ENCODE measurements at regions of chr6 and their contacts with region 1.

Region 1: GRCh38 chr6:20401205-20402091 is at the start of gene E2F3:
- DNase-seq: peak; percentile 100
- H3K4me3 Mint-ChIP-seq: peak within 1 kb of the TSS; percentile 98
- H3K27ac Mint-ChIP-seq: peak within 1 kb of the TSS; percentile 91
- H3K4me1 Mint-ChIP-seq: peaks cover 8% of the 10 kb centered on the region
- H3K27me3 Mint-ChIP-seq: no peaks in the 10 kb centered on the region
- CTCF ChIP-seq: no peak
- total RNA-seq, gene E2F3: 18.5 and 18.7 TPM in 2 replicates

Region 2: GRCh38 chr6:20212392-20213217 is 188.8 kb before region 1 on chr6 and contains the start of gene MBOAT1:
- CTCF ChIA-PET with region 1: no interaction called
- POLR2A ChIA-PET with region 1: interaction called, 5 read pairs
- intact Hi-C with region 1: loop called (anchors 5 kb)
- DNase-seq: peak; percentile 94
- H3K4me3 Mint-ChIP-seq: peak within 1 kb of the TSS; percentile 86
- H3K27ac Mint-ChIP-seq: peak within 1 kb of the TSS; percentile 78
- H3K4me1 Mint-ChIP-seq: peaks cover 12% of the 10 kb centered on the region
- H3K27me3 Mint-ChIP-seq: no peaks in the 10 kb centered on the region
- CTCF ChIP-seq: no peak
- total RNA-seq, gene MBOAT1: 6.3 and 9.3 TPM in 2 replicates

Region 3: GRCh38 chr6:20291764-20292580 is 109.5 kb before region 1 on chr6:
- CTCF ChIA-PET with region 1: interaction called, 11 read pairs
- POLR2A ChIA-PET with region 1: interaction called, 4 read pairs
- intact Hi-C with region 1: loop called (anchors 2 kb)
- DNase-seq: peak; percentile 90
- H3K4me3 Mint-ChIP-seq: no peak overlapping the region
- H3K27ac Mint-ChIP-seq: no peak overlapping the region
- H3K4me1 Mint-ChIP-seq: no peaks in the 10 kb centered on the region
- H3K27me3 Mint-ChIP-seq: peaks cover 17% of the 10 kb centered on the region
- CTCF ChIP-seq: peak; percentile 81

Region 4: GRCh38 chr6:20411953-20412681 is 10.7 kb after region 1 on chr6:
- CTCF ChIA-PET with region 1: interaction called, 10 read pairs
- POLR2A ChIA-PET with region 1: interaction called, 17 read pairs
- intact Hi-C with region 1: no loop called
- DNase-seq: no peak
- H3K4me3 Mint-ChIP-seq: no peak overlapping the region
- H3K27ac Mint-ChIP-seq: peak overlapping the region; percentile 86
- H3K4me1 Mint-ChIP-seq: peaks cover 26% of the 10 kb centered on the region
- H3K27me3 Mint-ChIP-seq: no peaks in the 10 kb centered on the region
- CTCF ChIP-seq: no peak

Region 5: DNA sequence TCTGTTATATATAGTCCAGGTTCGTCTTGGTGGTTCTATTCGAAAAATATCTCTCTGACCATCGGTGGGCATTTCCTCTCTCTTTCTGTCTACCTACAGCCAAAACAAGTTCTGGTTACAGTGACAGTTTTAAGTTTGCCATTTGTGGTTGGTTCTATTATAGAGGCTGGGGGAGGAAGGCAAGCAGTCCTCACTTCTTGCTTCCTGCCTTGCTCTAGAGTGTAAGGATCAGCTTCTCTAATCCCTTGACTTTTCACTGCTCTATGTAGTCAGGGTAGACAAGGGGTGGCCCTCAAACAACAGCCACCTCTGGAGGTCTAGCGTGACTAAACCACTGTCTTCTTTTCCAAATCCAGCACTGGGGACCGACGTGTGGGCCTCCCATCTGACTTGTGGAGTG is 16.4 kb after region 1 on chr6:
- CTCF ChIA-PET with region 1: interaction called, 10 read pairs
- POLR2A ChIA-PET with region 1: interaction called, 17 read pairs
- intact Hi-C with region 1: no loop called
- DNase-seq: no peak
- H3K4me3 Mint-ChIP-seq: no peak overlapping the region
- H3K27ac Mint-ChIP-seq: no peak overlapping the region
- H3K4me1 Mint-ChIP-seq: peaks cover 14% of the 10 kb centered on the region
- H3K27me3 Mint-ChIP-seq: no peaks in the 10 kb centered on the region
- CTCF ChIP-seq: no peak

Region 6: DNA sequence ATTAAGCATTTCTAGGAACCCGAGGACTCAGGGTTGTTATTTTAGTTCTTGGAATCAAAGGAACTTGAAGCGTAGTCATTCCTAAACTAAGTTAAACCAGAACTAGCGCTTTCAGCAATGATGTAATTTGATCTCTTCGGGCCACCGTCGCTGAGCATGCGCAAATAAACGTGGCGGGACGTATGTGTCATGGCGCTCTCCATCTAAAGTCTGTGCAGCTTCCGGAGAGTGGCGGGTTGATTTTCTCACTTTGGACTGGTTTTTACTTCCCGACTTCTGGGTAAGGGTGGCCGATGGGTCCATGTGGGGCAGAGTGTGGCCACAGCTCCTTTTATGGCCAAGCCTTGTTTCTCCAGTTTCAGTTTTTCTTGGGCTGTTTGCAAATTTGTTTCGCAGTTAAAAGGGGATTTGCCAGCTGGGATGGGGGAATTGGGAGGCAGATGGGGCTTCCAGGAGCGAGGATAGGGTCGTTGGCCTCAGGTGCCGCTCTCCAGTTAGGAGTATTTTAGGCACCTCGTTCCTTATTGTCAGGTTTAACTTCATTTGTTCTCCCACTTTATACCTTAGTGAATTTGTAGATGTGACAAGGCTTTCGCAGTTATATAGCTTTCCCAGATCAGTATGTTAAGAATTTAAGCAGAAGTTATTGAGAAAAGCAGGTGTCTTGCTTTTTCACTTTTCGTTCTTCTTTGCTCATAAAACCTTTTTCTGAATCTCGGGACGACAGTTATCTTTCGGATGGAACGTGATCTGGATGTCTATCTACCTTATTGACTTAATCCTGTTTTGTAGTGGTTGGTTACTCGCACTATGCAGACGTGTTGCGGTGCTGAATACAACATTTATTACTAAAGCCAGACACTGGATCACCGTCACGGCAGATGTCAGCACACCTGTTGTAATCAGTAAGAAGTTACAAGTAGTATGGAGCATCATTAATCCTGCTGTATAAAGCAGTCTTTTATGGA is 133.1 kb after region 1 on chr6 and contains the start of gene CDKAL1:
- CTCF ChIA-PET with region 1: interaction called, 8 read pairs
- POLR2A ChIA-PET with region 1: interaction called, 13 read pairs
- intact Hi-C with region 1: no loop called
- DNase-seq: peak; percentile 89
- H3K4me3 Mint-ChIP-seq: peak within 1 kb of the TSS; percentile 86
- H3K27ac Mint-ChIP-seq: peak within 1 kb of the TSS; percentile 92
- H3K4me1 Mint-ChIP-seq: peaks cover 19% of the 10 kb centered on the region
- H3K27me3 Mint-ChIP-seq: no peaks in the 10 kb centered on the region
- CTCF ChIP-seq: no peak
- total RNA-seq, gene CDKAL1: 11.8 and 13.2 TPM in 2 replicates

Region 7: DNA sequence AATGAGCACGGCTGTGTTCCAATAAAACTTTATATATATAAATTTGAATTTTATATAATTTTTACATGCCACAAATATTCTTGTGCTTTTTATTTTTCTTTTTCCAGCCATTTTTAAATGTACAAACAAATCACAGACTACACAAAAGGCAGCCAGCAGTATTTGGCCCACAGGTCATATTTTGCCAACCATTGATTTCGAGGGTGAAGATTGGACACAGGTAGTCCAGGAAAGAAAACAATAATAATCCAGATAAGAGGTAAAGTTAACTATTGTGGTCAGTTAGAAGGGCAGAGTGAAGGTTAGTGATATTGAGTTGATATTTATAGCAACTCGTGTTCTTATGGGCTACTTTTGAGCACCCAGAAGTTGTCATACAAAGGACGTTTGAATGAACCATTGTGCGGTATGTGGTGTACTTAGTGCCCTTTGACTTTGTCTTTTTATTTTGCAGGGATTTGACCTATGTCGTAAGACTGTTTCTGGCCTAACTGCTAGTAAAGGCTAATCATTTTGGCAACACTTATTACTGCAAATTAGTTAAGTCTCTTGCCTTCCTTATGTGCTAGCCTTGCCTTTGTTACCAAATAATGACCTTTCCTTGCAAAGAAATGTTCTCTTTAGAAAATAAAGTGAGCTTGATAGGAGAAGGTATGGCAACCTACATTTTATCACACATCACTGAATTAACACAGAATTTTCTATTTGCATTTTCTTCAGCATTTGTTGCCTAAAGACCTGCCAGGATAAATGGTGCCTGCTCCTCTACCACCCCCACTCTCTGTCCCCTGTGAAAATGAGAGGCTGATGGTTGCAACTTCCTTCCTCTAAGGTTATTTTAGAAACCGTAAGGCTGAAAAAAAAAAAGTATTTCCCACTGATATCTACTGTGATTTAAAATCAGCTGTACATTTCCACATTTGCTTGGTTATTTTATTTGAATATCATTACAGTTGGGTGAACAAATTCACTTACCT is 698.2 kb after region 1 on chr6:
- CTCF ChIA-PET with region 1: no interaction called
- POLR2A ChIA-PET with region 1: no interaction called
- intact Hi-C with region 1: no loop called
- DNase-seq: no peak
- H3K4me3 Mint-ChIP-seq: no peak overlapping the region
- H3K27ac Mint-ChIP-seq: no peak overlapping the region
- H3K4me1 Mint-ChIP-seq: no peaks in the 10 kb centered on the region
- H3K27me3 Mint-ChIP-seq: no peaks in the 10 kb centered on the region
- CTCF ChIP-seq: no peak

Measured in MCF 10A (cell line).